Activated CD4-positive, alpha-beta memory T cell treated with anti-CD3 and anti-CD28 coated beads, Interleukin-2, amount 10 ng/mL, durations not matched to agents 7 days and 5 days (primary cell): ENCODE measurements at regions of chr15 and their contacts with region 1.

Region 1: GRCh38 chr15:38690689-38691332 is 126.2 kb upstream of the RASGRP1 start:
- DNase-seq: peak; percentile 86
- H3K4me3 Mint-ChIP-seq: no peak overlapping the region
- H3K27ac Mint-ChIP-seq: peak overlapping the region; percentile 99
- H3K4me1 Mint-ChIP-seq: peaks cover 92% of the 10 kb centered on the region
- H3K27me3 Mint-ChIP-seq: no peaks in the 10 kb centered on the region

Region 2: GRCh38 chr15:37550360-37551024 is 1140.3 kb before region 1 on chr15:
- CTCF ChIA-PET with region 1: no interaction called
- POLR2A ChIA-PET with region 1: no interaction called
- DNase-seq: no peak
- H3K4me3 Mint-ChIP-seq: no peak overlapping the region
- H3K27ac Mint-ChIP-seq: no peak overlapping the region
- H3K4me1 Mint-ChIP-seq: no peaks in the 10 kb centered on the region
- H3K27me3 Mint-ChIP-seq: no peaks in the 10 kb centered on the region

Region 3: DNA sequence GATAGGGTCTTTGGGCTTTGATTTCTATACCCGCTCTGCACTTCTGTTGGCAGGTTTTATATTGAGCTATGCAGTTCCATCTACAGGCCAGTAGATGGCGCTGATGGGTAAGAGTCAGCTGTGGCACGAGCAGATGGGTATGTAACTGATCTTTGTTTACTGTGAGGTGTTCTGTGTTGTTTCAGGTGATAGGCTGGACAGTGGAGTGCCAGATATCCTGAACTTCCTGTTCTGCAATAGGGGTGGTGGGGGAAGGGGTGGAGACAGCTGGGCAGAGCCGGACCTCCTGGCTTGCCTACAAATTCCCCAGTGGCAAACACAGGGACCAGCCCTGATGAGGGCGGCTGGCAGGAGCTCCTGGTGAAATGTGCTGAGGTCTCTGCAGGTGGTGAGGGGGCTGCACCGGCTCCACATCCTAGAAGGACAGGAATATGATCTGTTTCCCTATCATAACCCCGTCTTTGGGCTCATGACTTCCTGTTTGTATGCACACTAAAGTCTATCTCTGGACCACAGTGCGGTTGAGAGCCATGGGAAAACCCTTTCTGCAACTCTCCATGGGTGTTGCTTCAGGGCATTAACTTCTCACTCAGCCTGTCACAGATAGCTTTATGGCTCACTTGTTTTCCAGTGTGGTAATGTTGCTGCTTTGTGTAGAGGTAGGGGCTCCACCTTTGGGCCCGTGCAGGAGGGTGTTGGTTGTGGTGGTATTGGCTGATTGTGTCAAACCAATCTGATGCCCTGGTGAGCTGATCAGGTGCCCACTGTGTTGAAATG is 250.3 kb before region 1 on chr15:
- CTCF ChIA-PET with region 1: interaction called, 139 read pairs
- POLR2A ChIA-PET with region 1: interaction called, 10 read pairs
- DNase-seq: peak; percentile 60
- H3K4me3 Mint-ChIP-seq: no peak overlapping the region
- H3K27ac Mint-ChIP-seq: no peak overlapping the region
- H3K4me1 Mint-ChIP-seq: peaks cover 11% of the 10 kb centered on the region
- H3K27me3 Mint-ChIP-seq: peaks cover 41% of the 10 kb centered on the region

Region 4: DNA sequence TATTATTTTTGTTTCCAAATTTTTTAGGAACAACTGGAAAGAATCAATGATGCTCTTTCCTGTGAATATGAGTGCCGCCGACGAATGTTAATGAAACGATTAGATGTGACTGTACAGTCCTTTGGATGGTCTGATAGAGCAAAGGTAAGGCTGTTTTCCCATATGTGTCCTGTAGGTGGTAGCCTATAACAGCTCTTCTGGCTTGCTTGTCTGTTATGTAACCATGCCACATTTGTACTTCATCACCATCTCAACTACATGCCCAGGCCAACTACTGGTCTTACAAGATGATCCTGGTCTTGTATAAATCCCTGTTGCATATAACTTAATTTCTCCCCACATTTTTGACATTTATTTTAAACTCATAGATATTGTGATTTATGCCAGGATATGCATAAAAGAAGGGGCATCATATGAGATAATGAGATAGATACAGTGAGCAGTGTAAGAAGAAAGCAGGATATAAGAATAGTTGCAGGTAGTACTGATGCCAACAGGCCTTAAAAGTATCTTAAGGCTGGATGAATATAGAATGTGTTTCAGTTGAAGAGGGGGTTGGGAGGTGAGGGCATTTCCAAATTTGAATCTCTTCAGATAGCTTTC is 216.6 kb before region 1 on chr15:
- CTCF ChIA-PET with region 1: interaction called, 79 read pairs
- POLR2A ChIA-PET with region 1: interaction called, 56 read pairs
- DNase-seq: peak; percentile 40
- H3K4me3 Mint-ChIP-seq: no peak overlapping the region
- H3K27ac Mint-ChIP-seq: peak overlapping the region; percentile 32
- H3K4me1 Mint-ChIP-seq: peaks cover 4% of the 10 kb centered on the region
- H3K27me3 Mint-ChIP-seq: no peaks in the 10 kb centered on the region

Region 5: GRCh38 chr15:38490242-38490922 is 200.4 kb before region 1 on chr15:
- CTCF ChIA-PET with region 1: interaction called, 13 read pairs
- POLR2A ChIA-PET with region 1: interaction called, 16 read pairs
- DNase-seq: no peak
- H3K4me3 Mint-ChIP-seq: no peak overlapping the region
- H3K27ac Mint-ChIP-seq: peak overlapping the region; percentile 17
- H3K4me1 Mint-ChIP-seq: peaks cover 57% of the 10 kb centered on the region
- H3K27me3 Mint-ChIP-seq: no peaks in the 10 kb centered on the region

Region 6: GRCh38 chr15:38514601-38515000 is 176.2 kb before region 1 on chr15:
- CTCF ChIA-PET with region 1: interaction called, 12 read pairs
- POLR2A ChIA-PET with region 1: interaction called, 10 read pairs
- DNase-seq: no peak
- H3K4me3 Mint-ChIP-seq: no peak overlapping the region
- H3K27ac Mint-ChIP-seq: peak overlapping the region; percentile 21
- H3K4me1 Mint-ChIP-seq: peaks cover 56% of the 10 kb centered on the region
- H3K27me3 Mint-ChIP-seq: no peaks in the 10 kb centered on the region

Region 7: DNA sequence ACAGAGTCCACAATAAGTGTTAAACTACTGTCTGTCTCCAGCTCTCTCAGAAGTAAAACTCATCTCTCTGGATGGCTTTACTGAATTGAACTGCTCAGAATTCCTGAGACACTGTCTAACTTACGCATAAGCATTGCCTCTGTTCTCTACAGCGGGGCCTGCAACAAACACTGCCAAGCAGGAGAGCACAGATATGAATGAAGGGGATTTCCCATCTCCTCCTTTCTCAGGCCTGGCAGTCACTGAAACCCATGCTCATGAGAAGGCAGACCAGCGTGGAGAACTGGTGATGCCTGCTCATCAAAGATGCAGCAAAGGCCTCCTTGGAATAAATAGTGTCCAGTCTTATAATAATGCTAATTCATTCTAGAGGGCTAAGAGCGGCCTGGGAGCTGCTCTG is 136.5 kb before region 1 on chr15:
- CTCF ChIA-PET with region 1: interaction called, 731 read pairs
- POLR2A ChIA-PET with region 1: interaction called, 1,063 read pairs
- DNase-seq: no peak
- H3K4me3 Mint-ChIP-seq: no peak overlapping the region
- H3K27ac Mint-ChIP-seq: peak overlapping the region; percentile 92
- H3K4me1 Mint-ChIP-seq: peaks cover 88% of the 10 kb centered on the region
- H3K27me3 Mint-ChIP-seq: no peaks in the 10 kb centered on the region